ENCODE measurements at regions of chr6 and their contacts with region 1.

Region 1: GRCh38 chr6:95417856-95418255 is 159.5 kb upstream of the MANEA start:
- DNase-seq: no peak
- ATAC-seq: no peak
- H3K4me3 ChIP-seq: no peak overlapping the region
- H3K4me3 Mint-ChIP-seq: no peak overlapping the region
- H3K27ac ChIP-seq: no peak overlapping the region
- H3K27ac Mint-ChIP-seq: no peak overlapping the region
- H3K4me1 ChIP-seq: no peaks in the 10 kb centered on the region
- H3K4me1 Mint-ChIP-seq: no peaks in the 10 kb centered on the region
- H3K27me3 ChIP-seq: no peaks in the 10 kb centered on the region
- H3K27me3 Mint-ChIP-seq: no peaks in the 10 kb centered on the region

Region 2: DNA sequence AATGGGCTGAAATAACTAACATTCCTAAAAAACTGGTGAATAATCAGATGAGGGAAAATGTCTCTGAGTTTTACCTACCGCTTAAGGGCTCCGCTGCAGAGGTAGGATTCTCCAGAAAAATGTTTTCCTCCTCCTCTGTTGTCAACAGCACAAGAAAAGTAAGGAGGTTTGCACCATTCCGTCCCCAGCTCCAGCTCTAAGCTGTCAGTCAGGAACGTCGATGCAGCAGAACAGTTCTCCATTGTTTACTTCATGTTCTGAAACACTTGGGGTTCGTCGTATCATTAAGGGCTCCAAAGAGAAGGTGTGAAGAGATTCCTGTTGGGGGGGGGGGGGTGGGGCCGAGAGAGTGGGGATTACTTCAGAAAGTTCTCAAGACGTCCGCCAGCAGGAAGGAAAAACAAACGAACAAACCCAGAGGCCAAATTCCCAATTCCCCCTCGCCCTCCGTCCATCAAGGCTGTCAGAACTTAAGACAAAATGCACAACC is 1864.4 kb after region 1 on chr6:
- CTCF ChIA-PET with region 1: no interaction called
- POLR2A ChIA-PET with region 1: interaction called in 1 of 2 experiments, 10 read pairs
- DNase-seq: peak in 1 of 35 experiments; percentile 22
- ATAC-seq: no peak
- H3K4me3 ChIP-seq: peak overlapping the region; percentile 96 to 98
- H3K4me3 Mint-ChIP-seq: peak overlapping the region; percentile 94
- H3K27ac ChIP-seq: peak overlapping the region; percentile 61
- H3K27ac Mint-ChIP-seq: peak overlapping the region; percentile 79 to 94
- H3K4me1 ChIP-seq: peaks cover 5 to 13% of the 10 kb centered on the region in 2 experiments
- H3K4me1 Mint-ChIP-seq: peaks cover 16 to 37% (median 25%) of the 10 kb centered on the region in 3 donors
- H3K27me3 ChIP-seq: no peaks in the 10 kb centered on the region
- H3K27me3 Mint-ChIP-seq: no peaks in the 10 kb centered on the region

Measured in T-cell (primary cell).